Activated T-helper 2 cell treated with anti-CD3 and anti-CD28 coated beads, Interferon-gamma antibody, Interleukin-2, Interleukin-4, amounts not matched to agents 10 μg/mL and 5 μg/mL and 100 μg/mL, durations not matched to agents 14 hours and 24 hours and 36 hours (primary cell): ENCODE measurements at regions of chr2 and their contacts with region 1.

Region 1: GRCh38 chr2:42788-43187 is 3.5 kb downstream of the FAM110C start:
- DNase-seq: no peak
- H3K4me3 Mint-ChIP-seq: peak overlapping the region; percentile 17
- H3K27ac Mint-ChIP-seq: no peak overlapping the region
- H3K4me1 Mint-ChIP-seq: peaks cover 56% of the 10 kb centered on the region
- H3K27me3 Mint-ChIP-seq: peaks cover 30% of the 10 kb centered on the region

Region 2: DNA sequence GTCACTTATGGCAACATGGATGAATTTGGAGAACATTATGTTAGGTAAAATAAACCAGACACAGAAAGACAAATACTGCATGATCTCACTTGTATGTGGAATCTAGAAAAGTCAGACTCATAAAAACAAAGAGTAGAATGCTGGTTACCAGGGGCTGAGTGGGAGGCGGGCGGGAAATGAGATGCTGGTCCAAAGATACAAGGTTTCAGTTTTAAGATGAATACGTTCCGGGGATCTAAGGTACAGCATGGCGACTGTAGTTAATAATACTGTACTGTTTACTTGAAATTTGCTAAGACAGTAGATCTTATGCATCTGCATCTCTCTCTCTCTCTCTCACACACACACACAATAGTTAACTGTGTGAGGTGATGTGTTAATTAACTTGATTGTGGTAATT is 10.7 kb before region 1 on chr2:
- intact Hi-C with region 1: loop called (anchors 1 kb)
- DNase-seq: peak; percentile 23
- H3K4me3 Mint-ChIP-seq: no peak overlapping the region
- H3K27ac Mint-ChIP-seq: peak overlapping the region; percentile 79
- H3K4me1 Mint-ChIP-seq: peaks cover 86% of the 10 kb centered on the region
- H3K27me3 Mint-ChIP-seq: no peaks in the 10 kb centered on the region